B cell (primary cell): ENCODE measurements at regions of chr7 and their contacts with region 1.

Region 1: GRCh38 chr7:20172736-20173334 is 44.3 kb downstream of the MACC1 start:
- DNase-seq: peak; percentile 54
- ATAC-seq: peak; percentile 60
- H3K4me3 ChIP-seq: no peak overlapping the region
- H3K4me3 Mint-ChIP-seq: no peak overlapping the region
- H3K27ac ChIP-seq: no peak overlapping the region
- H3K27ac Mint-ChIP-seq: no peak overlapping the region
- H3K4me1 ChIP-seq: peaks cover 0 to 3% of the 10 kb centered on the region in 2 donors
- H3K4me1 Mint-ChIP-seq: no peaks in the 10 kb centered on the region
- H3K27me3 ChIP-seq: no peaks in the 10 kb centered on the region
- H3K27me3 Mint-ChIP-seq: no peaks in the 10 kb centered on the region
- CTCF ChIP-seq: peak; percentile 43

Region 2: GRCh38 chr7:19747740-19748339 is 425.0 kb before region 1 on chr7:
- CTCF ChIA-PET with region 1: interaction called, 12 read pairs
- POLR2A ChIA-PET with region 1: no interaction called
- intact Hi-C with region 1: no loop called
- DNase-seq: peak; percentile 43
- ATAC-seq: no peak
- H3K4me3 ChIP-seq: no peak overlapping the region
- H3K4me3 Mint-ChIP-seq: no peak overlapping the region
- H3K27ac ChIP-seq: no peak overlapping the region
- H3K27ac Mint-ChIP-seq: no peak overlapping the region
- H3K4me1 ChIP-seq: no peaks in the 10 kb centered on the region
- H3K4me1 Mint-ChIP-seq: no peaks in the 10 kb centered on the region
- H3K27me3 ChIP-seq: no peaks in the 10 kb centered on the region
- H3K27me3 Mint-ChIP-seq: peaks cover 4% of the 10 kb centered on the region
- CTCF ChIP-seq: peak; percentile 76

Region 3: GRCh38 chr7:19754521-19755116 is 418.2 kb before region 1 on chr7:
- CTCF ChIA-PET with region 1: interaction called, 18 read pairs
- POLR2A ChIA-PET with region 1: no interaction called
- intact Hi-C with region 1: loop called (anchors 1 kb)
- DNase-seq: peak; percentile 58
- ATAC-seq: no peak
- H3K4me3 ChIP-seq: no peak overlapping the region
- H3K4me3 Mint-ChIP-seq: no peak overlapping the region
- H3K27ac ChIP-seq: no peak overlapping the region
- H3K27ac Mint-ChIP-seq: no peak overlapping the region
- H3K4me1 ChIP-seq: no peaks in the 10 kb centered on the region
- H3K4me1 Mint-ChIP-seq: no peaks in the 10 kb centered on the region
- H3K27me3 ChIP-seq: no peaks in the 10 kb centered on the region
- H3K27me3 Mint-ChIP-seq: peaks cover 6% of the 10 kb centered on the region
- CTCF ChIP-seq: peak; percentile 94

Region 4: GRCh38 chr7:19982841-19983835 is 189.7 kb before region 1 on chr7:
- CTCF ChIA-PET with region 1: interaction called, 19 read pairs
- POLR2A ChIA-PET with region 1: no interaction called
- intact Hi-C with region 1: loop called (anchors 2 kb)
- DNase-seq: peak; percentile 55
- ATAC-seq: no peak
- H3K4me3 ChIP-seq: no peak overlapping the region
- H3K4me3 Mint-ChIP-seq: no peak overlapping the region
- H3K27ac ChIP-seq: no peak overlapping the region
- H3K27ac Mint-ChIP-seq: no peak overlapping the region
- H3K4me1 ChIP-seq: no peaks in the 10 kb centered on the region
- H3K4me1 Mint-ChIP-seq: no peaks in the 10 kb centered on the region
- H3K27me3 ChIP-seq: no peaks in the 10 kb centered on the region
- H3K27me3 Mint-ChIP-seq: no peaks in the 10 kb centered on the region
- CTCF ChIP-seq: peak; percentile 47

Region 5: GRCh38 chr7:20158684-20159083 is 14.2 kb before region 1 on chr7:
- CTCF ChIA-PET with region 1: interaction called, 26 read pairs
- POLR2A ChIA-PET with region 1: no interaction called
- intact Hi-C with region 1: no loop called
- DNase-seq: peak; percentile 42
- ATAC-seq: peak; percentile 28
- H3K4me3 ChIP-seq: no peak overlapping the region
- H3K4me3 Mint-ChIP-seq: no peak overlapping the region
- H3K27ac ChIP-seq: no peak overlapping the region
- H3K27ac Mint-ChIP-seq: no peak overlapping the region
- H3K4me1 ChIP-seq: no peaks in the 10 kb centered on the region
- H3K4me1 Mint-ChIP-seq: peaks cover 5% of the 10 kb centered on the region
- H3K27me3 ChIP-seq: no peaks in the 10 kb centered on the region
- H3K27me3 Mint-ChIP-seq: no peaks in the 10 kb centered on the region
- CTCF ChIP-seq: peak; percentile 29